ENCODE measurements at regions of chr1 and their contacts with region 1.

Region 1: GRCh38 chr1:153922972-153923925 is at the start of gene GATAD2B:
- DNase-seq: peak; percentile 96 to 100
- H3K4me3 ChIP-seq: peak within 1 kb of the TSS; percentile 89 to 100 (median 96)
- H3K27ac ChIP-seq: peak within 1 kb of the TSS; percentile 83; the same call in 1 of the 2 replicates
- H3K4me1 ChIP-seq: peaks cover 6 to 14% (median 11%) of the 10 kb centered on the region in 4 experiments
- H3K27me3 ChIP-seq: no peaks in the 10 kb centered on the region
- CTCF ChIP-seq: no peak
- EP300 ChIP-seq: no peak
- POLR2A ChIP-seq: peak in 1 of 2 experiments; percentile 16; a peak in 2 of 3 replicates
- RAD21 ChIP-seq: peak in 1 of 2 experiments; percentile 9; a peak in 1 of 4 replicates
- total RNA-seq, gene GATAD2B: 39.1 and 41.5 TPM in 2 replicates

Region 2: DNA sequence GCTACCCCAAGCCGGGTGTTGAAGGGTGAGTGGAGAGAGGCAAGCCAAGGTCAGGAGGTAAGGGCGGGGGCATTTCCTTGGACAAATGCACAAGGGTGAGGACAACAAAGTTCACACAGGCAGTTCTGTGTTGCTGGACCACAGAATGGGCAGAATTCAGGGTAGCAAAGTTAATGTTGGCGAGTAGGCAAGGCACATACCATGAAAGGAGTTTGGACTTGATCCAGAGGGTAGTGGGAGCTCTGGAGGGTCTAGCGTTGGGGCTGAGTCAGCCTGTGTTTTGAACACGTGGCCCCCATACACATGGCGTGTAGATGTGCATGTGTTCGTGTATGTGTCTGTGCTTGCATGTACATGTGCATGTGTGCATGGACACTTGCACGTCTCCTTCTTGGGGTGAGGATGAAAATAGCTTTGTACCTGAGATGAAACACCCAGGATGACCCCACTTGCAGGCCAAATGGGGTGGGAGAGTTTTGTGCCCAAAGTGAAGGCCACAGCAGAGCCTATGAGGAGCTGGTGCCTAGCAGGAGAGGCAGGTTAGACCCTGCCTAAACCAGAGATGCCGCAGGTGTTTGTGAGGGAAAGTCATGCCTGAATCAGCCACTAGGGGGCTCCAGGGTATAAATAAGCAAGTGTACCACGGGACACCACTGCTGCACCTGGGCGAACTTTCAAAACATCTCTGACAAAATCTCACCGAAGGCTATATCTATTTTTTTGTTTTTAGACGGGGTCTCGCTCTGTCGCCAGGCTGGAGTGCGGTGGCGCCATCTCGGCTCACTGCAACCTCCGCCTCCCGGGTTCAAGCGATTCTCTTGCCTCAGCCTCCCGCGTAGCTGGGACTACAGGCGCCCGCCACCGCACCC is 126.2 kb before region 1 on chr1:
- CTCF ChIA-PET with region 1: interaction called, 8 read pairs
- POLR2A ChIA-PET with region 1: interaction called, 13 read pairs
- DNase-seq: peak; percentile 59 to 94
- H3K4me3 ChIP-seq: no peak overlapping the region
- H3K27ac ChIP-seq: no peak overlapping the region
- H3K4me1 ChIP-seq: peaks cover 6 to 32% (median 22%) of the 10 kb centered on the region in 4 experiments
- H3K27me3 ChIP-seq: no peaks in the 10 kb centered on the region
- CTCF ChIP-seq: peak in 2 of 3 experiments; percentile 81 to 85; a peak in 3 of 4 replicates
- EP300 ChIP-seq: no peak
- POLR2A ChIP-seq: no peak
- RAD21 ChIP-seq: peak; percentile 70 to 84

Region 3: DNA sequence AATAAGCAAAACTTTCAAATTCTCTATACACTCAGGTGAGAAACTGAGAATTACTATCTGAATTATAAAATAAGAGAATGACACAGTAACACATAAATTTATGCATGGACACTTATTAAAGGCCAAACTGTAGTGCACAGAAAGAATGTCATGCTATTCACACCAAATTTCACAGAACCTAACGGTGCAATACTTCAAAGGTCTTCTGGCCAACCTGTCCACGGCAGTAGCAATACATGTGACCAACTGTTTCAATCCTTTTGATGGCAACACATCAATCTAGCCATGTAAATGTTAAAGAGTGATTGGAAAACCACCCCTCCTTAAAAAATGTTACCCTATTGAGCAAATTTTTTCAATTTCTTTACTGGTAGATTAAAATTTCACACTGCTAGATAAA is 10.9 kb before region 1 on chr1:
- CTCF ChIA-PET with region 1: interaction called, 5 read pairs
- POLR2A ChIA-PET with region 1: interaction called, 35 read pairs
- DNase-seq: no peak
- H3K4me3 ChIP-seq: no peak overlapping the region
- H3K27ac ChIP-seq: no peak overlapping the region
- H3K4me1 ChIP-seq: no peaks in the 10 kb centered on the region
- H3K27me3 ChIP-seq: no peaks in the 10 kb centered on the region
- CTCF ChIP-seq: no peak
- EP300 ChIP-seq: no peak
- POLR2A ChIP-seq: no peak
- RAD21 ChIP-seq: no peak

Region 4: DNA sequence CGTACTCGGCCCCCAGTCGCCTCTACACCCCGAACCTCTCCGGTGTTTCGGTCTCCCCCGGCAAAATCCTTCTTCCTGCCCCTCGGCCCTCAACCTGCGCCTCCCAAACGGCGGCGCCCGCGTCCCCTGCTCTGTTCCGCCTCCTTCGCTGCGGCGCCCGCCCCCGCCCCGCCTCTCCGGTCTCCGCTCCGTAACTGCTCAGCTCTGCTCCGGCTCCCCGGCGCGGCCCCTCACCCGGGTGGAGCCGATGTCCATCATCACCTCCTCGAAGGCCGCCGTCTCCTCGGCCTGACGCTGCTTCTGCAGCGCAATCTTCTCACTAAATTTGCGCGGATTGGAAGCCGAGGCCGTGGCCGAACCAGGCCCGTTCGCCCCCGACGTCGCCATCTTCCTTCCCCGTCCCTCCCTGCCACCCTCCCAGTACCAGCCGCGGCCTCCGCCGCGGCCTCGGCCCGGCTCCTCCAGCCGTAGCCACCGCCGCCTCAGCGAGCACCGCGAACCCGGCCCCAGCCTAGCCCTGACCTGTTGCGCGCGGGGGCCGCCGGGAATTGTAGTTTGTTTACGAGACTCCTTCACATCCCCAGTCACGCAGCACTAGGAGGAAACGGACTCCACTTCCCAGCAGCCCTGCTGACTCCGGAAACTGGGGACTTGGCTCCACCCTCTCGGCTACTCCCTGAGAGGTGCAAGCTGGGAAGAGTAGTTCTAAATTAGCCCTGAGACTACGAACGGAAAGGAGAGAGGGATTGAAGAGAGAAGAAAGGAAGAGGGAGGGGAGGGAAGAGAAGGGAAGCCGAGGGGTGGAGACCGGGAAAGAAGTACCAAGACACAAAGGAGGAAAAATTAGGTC is 35.1 kb after region 1 on chr1 and contains the start of gene CRTC2:
- CTCF ChIA-PET with region 1: interaction called, 3 read pairs
- POLR2A ChIA-PET with region 1: interaction called, 35 read pairs
- DNase-seq: peak; percentile 96 to 97
- H3K4me3 ChIP-seq: peak within 1 kb of the TSS; percentile 82 to 98 (median 88)
- H3K27ac ChIP-seq: peak within 1 kb of the TSS; percentile 77
- H3K4me1 ChIP-seq: peaks cover 6 to 20% (median 12%) of the 10 kb centered on the region in 4 experiments
- H3K27me3 ChIP-seq: no peaks in the 10 kb centered on the region
- CTCF ChIP-seq: no peak
- EP300 ChIP-seq: 0 out of 3 replicates have a peak, but pooled peaks of 1 of the 2 experiments have one; percentile 13
- POLR2A ChIP-seq: peak in 1 of 2 experiments; percentile 37; a peak in 2 of 3 replicates
- RAD21 ChIP-seq: no peak; a peak in 1 of 4 replicates
- total RNA-seq, gene CRTC2: 28.6 and 33.7 TPM in 2 replicates

Region 5: DNA sequence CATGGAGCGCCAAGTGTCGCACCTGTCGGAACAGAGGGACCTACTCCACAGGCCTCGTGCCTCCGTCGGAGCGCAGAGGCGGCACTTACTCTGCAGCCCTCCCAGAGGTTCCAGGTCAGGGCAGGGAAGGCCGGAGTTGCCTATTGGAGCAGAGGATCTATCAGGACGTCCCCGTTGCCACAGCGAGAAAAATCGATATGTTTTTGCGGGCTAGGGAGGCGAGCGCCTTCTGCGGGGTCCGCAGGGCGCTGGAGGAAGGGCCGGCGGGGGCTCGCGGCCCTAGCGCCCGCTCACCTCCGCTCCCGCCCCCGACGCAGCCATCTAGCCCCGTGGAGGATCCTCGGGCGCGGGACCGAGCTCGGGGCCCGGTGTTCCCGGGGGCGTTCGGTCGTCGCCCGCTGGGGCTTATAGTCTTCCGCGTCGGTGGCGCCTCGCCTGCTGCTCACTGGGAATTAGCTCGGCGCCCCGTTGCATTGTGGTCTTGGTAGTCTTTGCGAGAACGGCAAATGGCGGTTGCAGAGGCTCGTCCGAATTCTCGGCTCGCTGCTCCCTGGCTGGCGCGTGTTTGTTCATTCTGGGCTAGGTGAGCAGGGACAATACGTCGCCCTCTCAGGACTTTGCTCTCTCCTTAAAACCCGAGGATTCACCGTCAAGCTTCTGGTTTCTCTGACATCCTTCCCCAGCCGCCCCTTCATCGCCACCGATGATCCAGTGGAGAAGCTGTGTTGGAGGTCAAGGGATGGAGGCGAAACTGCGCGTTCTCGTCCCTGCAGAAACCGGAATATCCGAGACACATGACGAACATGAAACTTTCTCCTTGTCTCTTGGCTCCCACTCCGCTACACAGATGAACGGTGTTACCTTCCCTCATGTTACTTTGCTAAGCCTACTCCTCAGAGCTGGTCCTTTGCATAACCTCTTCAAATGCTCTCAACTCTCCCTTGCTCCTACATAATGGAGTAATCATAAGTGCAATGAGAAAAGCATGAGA is 54.3 kb after region 1 on chr1 and contains the start of gene JTB:
- CTCF ChIA-PET with region 1: no interaction called
- POLR2A ChIA-PET with region 1: interaction called, 12 read pairs
- DNase-seq: peak in 1 of 2 experiments; percentile 88
- H3K4me3 ChIP-seq: peak within 1 kb of the TSS; percentile 91 to 99 (median 93)
- H3K27ac ChIP-seq: peak within 1 kb of the TSS; percentile 66
- H3K4me1 ChIP-seq: no peaks in the 10 kb centered on the region; a peak in 1 of 7 replicates
- H3K27me3 ChIP-seq: no peaks in the 10 kb centered on the region
- CTCF ChIP-seq: no peak
- EP300 ChIP-seq: no peak
- POLR2A ChIP-seq: peak; percentile 76 to 78
- RAD21 ChIP-seq: no peak
- total RNA-seq, gene JTB: 91.1 and 93.0 TPM in 2 replicates